Dorsolateral prefrontal cortex (tissue), 120 donors: ENCODE measurements at regions of chr17 and their contacts with region 1.

Region 1: GRCh38 chr17:68247445-68248198 is at the start of gene AMZ2:
- DNase-seq: peak; percentile 87 to 98 (median 94)
- H3K4me3 ChIP-seq: peak within 1 kb of the TSS; percentile 60 to 97 (median 88)
- H3K27ac ChIP-seq: peak within 1 kb of the TSS; percentile 85 to 100 (median 97)
- H3K27me3 ChIP-seq: no peaks in the 10 kb centered on the region
- CTCF ChIP-seq: peak in 33 of 56 donors; percentile 12 to 66 (median 29)
- total RNA-seq, gene AMZ2: 77.7 to 163 (median 118) TPM

Region 2: GRCh38 chr17:67912656-67913055 is 335.0 kb before region 1 on chr17:
- intact Hi-C with region 1: no loop called
- DNase-seq: no peak
- H3K4me3 ChIP-seq: no peak overlapping the region
- H3K27ac ChIP-seq: no peak overlapping the region
- H3K27me3 ChIP-seq: no peaks in the 10 kb centered on the region
- CTCF ChIP-seq: no peak

Region 3: DNA sequence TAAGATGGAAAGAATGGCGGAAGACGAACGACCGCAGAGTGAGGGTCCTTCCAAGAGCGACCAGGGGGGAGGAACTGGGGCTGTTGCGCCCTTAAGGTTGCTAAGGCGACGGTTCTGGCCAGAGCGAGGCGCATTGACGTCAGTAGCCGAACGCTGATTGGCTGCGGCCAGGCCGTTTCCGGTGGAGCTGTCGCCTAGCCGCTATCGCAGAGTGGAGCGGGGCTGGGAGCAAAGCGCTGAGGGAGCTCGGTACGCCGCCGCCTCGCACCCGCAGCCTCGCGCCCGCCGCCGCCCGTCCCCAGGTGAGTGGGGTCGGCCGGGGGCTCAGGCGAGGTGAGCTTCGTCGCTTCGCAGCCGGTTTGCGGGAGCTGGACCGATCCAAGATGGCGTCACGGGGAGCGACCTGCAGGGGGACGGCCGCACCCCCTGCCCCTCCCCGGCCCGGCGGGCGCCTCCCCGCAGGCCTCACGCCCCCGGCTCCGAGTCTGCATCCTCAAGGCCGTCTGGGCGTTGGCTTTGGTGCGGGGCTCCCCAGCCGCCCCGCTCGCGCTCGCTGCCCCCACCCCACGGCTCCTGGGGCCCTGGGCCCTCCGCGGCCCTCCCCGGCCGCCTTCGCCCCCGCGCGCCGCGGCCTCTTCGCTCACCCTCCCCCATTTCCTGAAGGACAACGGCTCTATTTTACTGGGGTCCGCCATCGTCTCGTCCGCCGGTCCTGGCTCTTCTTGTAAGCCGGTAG is 264.8 kb after region 1 on chr17 and contains the start of gene PRKAR1A:
- intact Hi-C with region 1: loop called in 1 of 2 experiments (anchors 5 kb)
- DNase-seq: peak; percentile 95 to 99 (median 98)
- H3K4me3 ChIP-seq: peak within 1 kb of the TSS; percentile 70 to 99 (median 89)
- H3K27ac ChIP-seq: peak within 1 kb of the TSS; percentile 87 to 100 (median 99)
- H3K27me3 ChIP-seq: no peaks in the 10 kb centered on the region
- CTCF ChIP-seq: peak in 29 of 56 donors; percentile 5 to 53 (median 31)
- total RNA-seq, gene PRKAR1A: 224 to 559 (median 417) TPM